ENCODE measurements at regions of chr10 and their contacts with region 1.

Region 1: DNA sequence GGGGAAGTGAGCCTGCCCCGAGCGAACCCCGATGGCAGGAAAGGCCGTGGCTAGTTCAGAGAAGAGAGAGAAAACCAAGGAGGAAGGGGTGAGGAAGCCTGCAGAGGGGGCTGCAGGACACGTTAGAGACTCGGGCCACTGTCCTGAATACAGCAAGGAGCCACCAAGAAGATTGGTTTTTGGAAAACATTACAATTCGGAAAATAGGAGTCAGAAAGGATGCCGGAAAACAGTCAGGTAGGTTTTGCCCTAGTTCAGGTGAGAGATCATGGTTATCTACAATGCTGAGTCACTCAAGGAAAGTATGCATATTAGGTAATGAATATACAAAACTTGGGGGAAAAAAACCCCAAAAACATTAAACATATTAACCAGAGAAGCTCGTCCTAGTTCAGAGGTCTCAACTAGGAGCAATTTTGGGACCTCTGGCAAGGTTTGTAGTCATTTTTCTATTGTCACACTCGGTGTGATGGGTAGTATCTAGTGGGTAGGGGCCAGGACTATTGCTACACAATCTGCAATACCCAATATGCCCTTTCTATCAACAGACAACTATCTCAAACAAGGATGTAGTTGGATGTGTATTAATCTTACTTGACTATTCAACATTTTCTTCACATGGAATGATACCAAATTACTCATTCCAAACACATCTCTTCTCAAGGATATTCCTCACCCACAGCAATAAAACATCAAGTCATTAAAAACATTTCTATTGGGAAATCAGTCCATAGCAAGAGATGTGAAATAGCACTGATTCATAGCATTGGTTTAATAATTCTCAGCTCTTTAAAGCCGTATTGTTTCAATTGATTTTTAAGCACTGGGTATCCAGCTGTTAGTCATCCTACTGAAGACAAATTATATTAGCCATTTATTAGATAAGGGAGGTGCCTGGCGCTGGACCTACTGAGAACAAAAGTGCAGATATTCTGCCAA is 74.4 kb upstream of the RSU1 start:
- DNase-seq: peak; percentile 54 to 66
- ATAC-seq: peak in 7 of 8 donors; percentile 85 to 98 (median 92)
- H3K4me3 ChIP-seq: no peak overlapping the region
- H3K27ac ChIP-seq: peak overlapping the region in 2 of 10 donors; percentile 46 to 54
- H3K4me1 ChIP-seq: peaks cover 0 to 7% (median 0%) of the 10 kb centered on the region in 9 donors
- H3K27me3 ChIP-seq: no peaks in the 10 kb centered on the region
- CTCF ChIP-seq: peak; percentile 23 to 79 (median 58)

Region 2: DNA sequence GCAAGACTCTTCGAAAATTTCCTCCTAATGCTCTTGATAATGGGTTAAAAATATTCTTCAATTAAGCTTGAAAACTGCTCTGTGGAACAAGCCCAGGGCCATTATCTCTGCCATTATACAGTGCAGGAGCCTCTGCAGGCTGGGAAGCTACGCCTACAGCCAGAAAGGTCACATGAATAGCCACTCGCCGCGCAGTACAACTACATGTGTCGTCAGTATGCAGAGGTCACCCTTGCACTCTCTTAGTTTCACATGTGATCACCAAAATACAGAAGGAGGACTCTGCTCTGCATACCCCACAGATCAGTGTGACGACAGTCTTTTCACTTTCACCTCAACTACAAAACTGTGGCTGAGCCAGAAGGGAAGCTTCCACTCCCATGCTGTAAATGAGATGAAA is 228.2 kb before region 1 on chr10:
- intact Hi-C with region 1: no loop called
- DNase-seq: peak in 1 of 2 donors; percentile 9
- ATAC-seq: peak; percentile 72 to 95 (median 89)
- H3K4me3 ChIP-seq: no peak overlapping the region
- H3K27ac ChIP-seq: peak overlapping the region in 4 of 10 donors; percentile 21 to 50 (median 29)
- H3K4me1 ChIP-seq: peaks cover 0 to 12% (median 0%) of the 10 kb centered on the region in 9 donors
- H3K27me3 ChIP-seq: no peaks in the 10 kb centered on the region
- CTCF ChIP-seq: no peak

Region 3: DNA sequence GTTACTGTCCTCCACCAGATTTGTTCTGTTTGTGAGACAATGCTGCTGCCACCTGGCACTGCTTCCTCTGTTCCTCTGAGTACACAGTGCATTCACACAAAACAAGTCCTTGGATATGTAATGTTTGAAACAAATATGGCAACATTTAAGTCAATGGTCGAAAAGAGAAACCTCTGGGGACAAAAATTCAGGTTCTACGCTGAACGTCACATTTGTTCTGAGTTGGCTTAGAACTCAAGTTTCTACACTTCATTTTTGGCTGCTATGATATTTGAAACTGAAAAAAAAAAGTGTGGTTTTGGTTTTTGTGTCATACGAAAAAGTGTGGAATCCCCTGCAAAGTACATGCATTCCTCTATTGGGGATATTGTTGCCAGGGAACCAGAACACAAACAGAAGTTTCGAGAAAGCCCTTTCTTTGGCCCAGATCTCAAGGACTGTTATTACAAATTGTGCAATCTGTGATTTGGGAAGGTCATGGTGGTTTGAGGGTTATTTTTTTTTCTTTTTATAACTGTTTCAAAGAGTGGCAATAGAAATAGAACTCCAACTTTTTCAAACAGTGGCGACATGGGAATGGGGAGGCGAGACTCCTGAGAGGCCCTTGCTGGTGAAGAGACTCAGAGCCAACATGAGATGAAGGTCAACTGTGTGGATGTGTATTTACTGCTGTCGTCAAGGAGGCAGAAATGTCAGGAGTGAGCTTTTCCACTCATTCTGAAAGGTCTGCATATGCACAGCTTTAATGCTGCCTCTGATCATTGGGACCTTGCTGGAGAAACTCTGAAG is 110.5 kb after region 1 on chr10:
- intact Hi-C with region 1: loop called in 2 of 10 experiments (anchors 5 to 10 kb)
- DNase-seq: peak; percentile 29 to 74
- ATAC-seq: peak; percentile 63 to 84 (median 80)
- H3K4me3 ChIP-seq: no peak overlapping the region
- H3K27ac ChIP-seq: peak overlapping the region; percentile 19 to 82 (median 72)
- H3K4me1 ChIP-seq: peaks cover 2 to 53% (median 22%) of the 10 kb centered on the region in 9 donors
- H3K27me3 ChIP-seq: no peaks in the 10 kb centered on the region
- CTCF ChIP-seq: no peak

Region 4: DNA sequence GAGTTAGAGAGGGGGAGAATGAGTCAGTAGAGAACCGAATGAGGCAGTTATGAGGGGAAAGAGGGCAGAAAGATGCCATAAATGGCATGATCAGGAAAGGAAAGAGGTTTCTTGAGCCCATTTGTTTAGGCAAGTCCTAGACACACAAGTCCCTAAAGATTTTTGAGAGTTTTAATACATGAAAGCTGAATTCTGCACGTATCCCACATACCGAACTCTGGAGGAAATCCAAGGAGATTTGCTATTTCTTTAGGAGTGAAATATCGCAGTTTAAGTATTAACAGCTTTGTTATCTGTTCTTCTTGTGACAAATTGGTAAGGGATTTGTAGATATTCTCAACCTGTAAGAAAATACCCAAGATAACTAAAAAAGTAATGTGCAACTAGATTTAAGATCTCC is 261.7 kb after region 1 on chr10:
- intact Hi-C with region 1: no loop called
- DNase-seq: no peak
- ATAC-seq: no peak
- H3K4me3 ChIP-seq: no peak overlapping the region
- H3K27ac ChIP-seq: no peak overlapping the region
- H3K4me1 ChIP-seq: peaks cover 0 to 6% (median 0%) of the 10 kb centered on the region in 9 donors
- H3K27me3 ChIP-seq: no peaks in the 10 kb centered on the region
- CTCF ChIP-seq: no peak

Region 5: GRCh38 chr10:17200912-17201793 is 309.5 kb after region 1 on chr10 and contains the start of gene TRDMT1:
- intact Hi-C with region 1: loop called in 1 of 10 experiments (anchors 5 kb)
- DNase-seq: peak; percentile 87 to 90
- ATAC-seq: peak; percentile 99 to 100 (median 100)
- H3K4me3 ChIP-seq: peak within 1 kb of the TSS; percentile 63 to 93 (median 74)
- H3K27ac ChIP-seq: peak within 1 kb of the TSS; percentile 81 to 99 (median 94)
- H3K4me1 ChIP-seq: peaks cover 0 to 26% (median 18%) of the 10 kb centered on the region in 9 donors
- H3K27me3 ChIP-seq: no peaks in the 10 kb centered on the region
- CTCF ChIP-seq: peak in 3 of 9 donors; percentile 40 to 51 (median 43)
- total RNA-seq, gene TRDMT1: 3.3 to 6.3 (median 4.0) TPM

Region 6: DNA sequence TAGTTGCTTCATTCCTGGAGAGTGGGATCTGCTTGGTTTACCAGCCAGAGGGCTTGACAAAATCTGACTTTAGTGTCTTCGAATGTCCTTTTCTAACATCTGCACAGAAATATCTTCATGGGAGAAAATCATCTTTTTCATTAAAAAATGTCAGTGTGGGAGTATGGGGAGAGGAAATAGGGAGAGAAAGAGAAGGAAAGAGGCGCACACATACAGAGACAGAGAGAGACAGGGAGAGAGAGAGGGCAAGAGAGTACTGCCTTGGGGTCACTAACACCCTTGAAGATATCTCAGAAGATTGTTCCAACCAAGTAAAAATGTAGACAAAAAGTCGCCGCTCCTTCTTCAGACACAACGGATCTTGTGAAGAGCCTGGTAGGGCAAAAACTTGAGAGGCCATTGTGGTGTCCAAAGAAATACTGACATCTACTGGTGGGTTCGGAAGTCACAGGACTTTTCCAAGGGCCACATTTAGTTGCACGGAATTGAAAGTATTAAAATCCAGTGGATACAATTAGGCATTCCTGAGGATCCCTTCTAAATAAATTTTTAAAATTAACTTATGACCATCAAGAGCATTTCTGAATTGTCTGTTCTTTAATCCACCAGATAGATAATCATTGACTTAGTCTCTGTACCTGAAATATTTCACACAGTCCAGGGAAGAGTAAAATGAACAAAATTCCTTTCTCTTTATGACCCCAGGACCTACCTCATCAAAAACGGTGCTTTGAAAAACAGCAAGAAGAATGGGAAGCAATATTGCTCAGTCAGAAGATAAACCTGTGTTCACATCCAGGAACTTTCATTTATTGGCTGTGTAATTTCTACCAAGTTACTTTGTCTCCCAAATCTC is 366.1 kb after region 1 on chr10:
- intact Hi-C with region 1: loop called in 2 of 10 experiments (anchors 2 kb)
- DNase-seq: peak in 1 of 2 donors; percentile 65
- ATAC-seq: peak; percentile 64 to 93 (median 87)
- H3K4me3 ChIP-seq: peak overlapping the region in 5 of 10 donors; percentile 18 to 38 (median 24)
- H3K27ac ChIP-seq: peak overlapping the region in 1 of 10 donors; percentile 10
- H3K4me1 ChIP-seq: peaks cover 0 to 13% (median 0%) of the 10 kb centered on the region in 9 donors
- H3K27me3 ChIP-seq: no peaks in the 10 kb centered on the region
- CTCF ChIP-seq: peak; percentile 75 to 91 (median 87)